ENCODE measurements at regions of chr9 and their contacts with region 1.

Region 1: DNA sequence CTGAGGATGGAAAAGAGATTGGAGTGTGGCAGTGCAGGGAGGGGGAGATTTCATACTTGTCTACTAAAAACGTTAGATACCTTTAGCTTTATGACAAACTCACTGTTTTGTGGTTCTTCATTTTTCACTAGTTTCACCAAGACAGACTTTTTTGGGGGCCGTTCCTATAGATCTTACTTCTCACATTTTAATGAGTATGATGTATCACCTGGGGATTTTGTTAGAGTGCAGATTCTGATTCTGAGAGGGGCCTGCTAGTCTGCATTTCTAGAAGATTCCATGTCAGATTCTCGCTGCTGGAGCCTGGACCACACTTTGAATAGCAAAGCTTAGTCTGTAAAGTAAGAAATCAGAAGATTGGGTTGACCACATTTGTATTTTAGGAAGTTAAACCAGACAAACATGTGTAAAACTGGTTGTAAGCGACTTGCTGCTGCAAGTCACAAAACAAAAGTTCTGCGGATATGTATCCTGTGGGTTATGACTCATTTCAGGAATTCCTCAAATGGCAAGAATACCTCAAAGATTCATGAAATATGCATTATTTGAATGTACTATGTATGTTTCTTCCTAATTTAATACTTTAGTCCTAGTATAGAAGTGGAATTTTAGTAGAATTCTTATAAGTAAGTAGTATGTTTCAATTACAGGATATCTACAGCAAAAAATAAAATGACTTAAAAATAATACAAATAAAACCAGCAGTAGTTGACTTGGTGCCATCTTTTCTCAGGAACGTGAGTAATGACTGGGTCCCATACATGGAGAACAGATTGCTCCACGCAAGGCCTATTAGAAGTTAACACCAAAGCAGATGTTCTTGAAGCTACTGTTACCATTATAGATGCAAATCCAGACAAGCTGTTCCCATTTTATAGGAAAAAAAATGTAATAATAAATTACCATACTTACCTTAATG is 27.8 kb downstream of the NFIL3 start:
- DNase-seq: peak; percentile 87
- H3K4me3 ChIP-seq: no peak overlapping the region
- CTCF ChIP-seq: no peak

Region 2: DNA sequence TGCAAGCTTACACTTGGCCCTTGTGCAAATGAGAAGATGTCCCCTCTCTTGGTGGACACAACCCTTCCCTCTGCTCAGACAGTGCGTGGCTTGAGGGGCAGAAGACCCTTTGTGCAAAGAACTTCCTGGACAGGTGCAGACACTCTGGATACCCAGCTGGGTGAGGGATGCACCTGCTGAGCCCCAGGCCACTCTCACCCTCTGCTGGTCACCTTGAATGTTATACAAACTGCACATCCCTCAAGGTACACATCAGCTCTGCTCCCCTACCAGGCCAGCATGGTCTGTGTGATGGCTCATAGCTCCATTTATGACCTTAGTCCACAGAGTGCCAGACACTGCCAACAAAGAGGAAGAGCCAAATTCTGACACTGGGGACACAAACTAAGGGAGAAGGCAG is 750.1 kb before region 1 on chr9:
- in situ Hi-C with region 1: no loop called
- DNase-seq: no peak
- H3K4me3 ChIP-seq: no peak overlapping the region
- CTCF ChIP-seq: no peak

Region 3: DNA sequence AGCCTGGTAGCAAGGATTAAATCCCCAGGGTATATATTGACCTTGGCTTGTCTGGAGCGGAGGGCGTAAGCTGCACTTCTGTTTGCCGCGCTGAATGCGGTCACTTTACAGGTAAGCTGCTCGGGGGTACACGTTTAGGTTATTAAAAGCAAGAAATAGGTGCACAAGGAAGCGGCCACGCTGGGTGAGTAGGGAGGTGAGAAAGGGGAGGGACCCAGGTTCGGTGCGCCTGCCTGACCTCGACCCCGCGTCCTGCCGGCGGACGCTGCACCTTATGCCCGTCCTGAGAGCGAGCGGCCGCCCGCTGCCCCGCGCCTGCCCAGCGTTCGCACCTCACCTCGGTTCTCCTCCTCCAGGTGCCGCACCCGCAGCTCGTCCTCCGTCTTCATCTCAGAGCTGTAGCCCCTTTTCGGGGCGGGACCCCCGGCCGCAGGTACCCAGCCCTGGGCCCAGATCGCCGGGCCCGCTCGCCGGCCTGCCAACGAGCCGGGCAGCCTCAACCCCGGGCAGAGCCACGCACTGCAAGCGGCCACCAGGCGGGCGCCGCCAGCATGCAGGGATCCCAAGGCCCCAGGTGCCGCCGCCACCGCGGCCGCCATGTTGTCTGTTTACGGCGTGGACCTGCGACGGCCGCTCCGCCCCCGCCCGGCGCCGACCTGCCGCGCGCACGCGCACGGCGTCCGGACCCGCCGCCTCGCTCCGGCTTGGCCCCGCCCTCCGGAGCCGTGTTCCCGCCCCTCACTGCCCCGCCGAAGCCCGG is 34.3 kb before region 1 on chr9 and contains the start of gene AUH:
- in situ Hi-C with region 1: loop called (anchors 5 kb)
- DNase-seq: peak; percentile 26
- H3K4me3 ChIP-seq: peak within 1 kb of the TSS; percentile 91
- CTCF ChIP-seq: no peak

Measured in astrocyte of the cerebellum (primary cell).